ENCODE measurements at regions of chr1 and their contacts with region 1.

Region 1: GRCh38 chr1:173476664-173477285 is 360 bp upstream of the PRDX6 start:
- DNase-seq: peak; percentile 51 to 91 (median 73)
- ATAC-seq: peak; percentile 76
- H3K4me3 ChIP-seq: peak overlapping the region; percentile 71 to 83
- H3K4me3 Mint-ChIP-seq: peak overlapping the region; percentile 93
- H3K27ac ChIP-seq: peak overlapping the region; percentile 70 to 91
- H3K27ac Mint-ChIP-seq: peak overlapping the region; percentile 95
- H3K4me1 ChIP-seq: peaks cover 54% of the 10 kb centered on the region
- H3K4me1 Mint-ChIP-seq: peaks cover 75% of the 10 kb centered on the region
- H3K27me3 ChIP-seq: no peaks in the 10 kb centered on the region
- H3K27me3 Mint-ChIP-seq: no peaks in the 10 kb centered on the region
- CTCF ChIP-seq: no peak

Region 2: GRCh38 chr1:171741872-171742576 is 1734.8 kb before region 1 on chr1 and contains the start of gene VAMP4:
- CTCF ChIA-PET with region 1: no interaction called
- POLR2A ChIA-PET with region 1: no interaction called
- intact Hi-C with region 1: loop called in 1 of 2 experiments (anchors 10 kb)
- DNase-seq: peak; percentile 72 to 93 (median 85)
- ATAC-seq: peak; percentile 87
- H3K4me3 ChIP-seq: peak within 1 kb of the TSS; percentile 94 to 99
- H3K4me3 Mint-ChIP-seq: peak within 1 kb of the TSS; percentile 100
- H3K27ac ChIP-seq: peak within 1 kb of the TSS; percentile 96 to 99
- H3K27ac Mint-ChIP-seq: peak within 1 kb of the TSS; percentile 100
- H3K4me1 ChIP-seq: peaks cover 39% of the 10 kb centered on the region
- H3K4me1 Mint-ChIP-seq: peaks cover 51% of the 10 kb centered on the region
- H3K27me3 ChIP-seq: no peaks in the 10 kb centered on the region
- H3K27me3 Mint-ChIP-seq: no peaks in the 10 kb centered on the region
- CTCF ChIP-seq: no peak
- total RNA-seq, gene VAMP4: 8.4 to 8.6 TPM

Region 3: DNA sequence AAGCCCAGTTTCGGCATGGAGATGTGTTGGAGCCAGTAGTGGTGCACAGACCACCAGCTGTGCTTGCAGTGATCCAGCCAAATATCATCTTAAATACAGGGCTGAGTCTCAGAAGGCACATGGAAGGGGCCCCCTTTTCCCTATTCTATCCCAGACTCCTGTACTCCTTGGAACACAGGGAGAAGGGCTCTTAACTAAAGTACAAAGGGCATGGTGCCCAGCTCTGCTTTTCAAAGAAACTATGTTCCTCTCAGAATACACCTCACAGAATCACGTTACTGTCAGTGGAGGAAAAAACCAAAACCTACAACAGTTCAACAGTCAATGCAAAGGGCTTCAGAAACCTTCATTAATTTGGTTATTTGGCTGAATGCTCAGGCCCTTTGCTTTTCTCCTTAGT is 1236.9 kb before region 1 on chr1:
- CTCF ChIA-PET with region 1: no interaction called
- POLR2A ChIA-PET with region 1: no interaction called
- intact Hi-C with region 1: no loop called
- DNase-seq: no peak
- ATAC-seq: no peak
- H3K4me3 ChIP-seq: no peak overlapping the region
- H3K4me3 Mint-ChIP-seq: no peak overlapping the region
- H3K27ac ChIP-seq: no peak overlapping the region
- H3K27ac Mint-ChIP-seq: no peak overlapping the region
- H3K4me1 ChIP-seq: no peaks in the 10 kb centered on the region
- H3K4me1 Mint-ChIP-seq: no peaks in the 10 kb centered on the region
- H3K27me3 ChIP-seq: no peaks in the 10 kb centered on the region
- H3K27me3 Mint-ChIP-seq: no peaks in the 10 kb centered on the region
- CTCF ChIP-seq: no peak

Region 4: DNA sequence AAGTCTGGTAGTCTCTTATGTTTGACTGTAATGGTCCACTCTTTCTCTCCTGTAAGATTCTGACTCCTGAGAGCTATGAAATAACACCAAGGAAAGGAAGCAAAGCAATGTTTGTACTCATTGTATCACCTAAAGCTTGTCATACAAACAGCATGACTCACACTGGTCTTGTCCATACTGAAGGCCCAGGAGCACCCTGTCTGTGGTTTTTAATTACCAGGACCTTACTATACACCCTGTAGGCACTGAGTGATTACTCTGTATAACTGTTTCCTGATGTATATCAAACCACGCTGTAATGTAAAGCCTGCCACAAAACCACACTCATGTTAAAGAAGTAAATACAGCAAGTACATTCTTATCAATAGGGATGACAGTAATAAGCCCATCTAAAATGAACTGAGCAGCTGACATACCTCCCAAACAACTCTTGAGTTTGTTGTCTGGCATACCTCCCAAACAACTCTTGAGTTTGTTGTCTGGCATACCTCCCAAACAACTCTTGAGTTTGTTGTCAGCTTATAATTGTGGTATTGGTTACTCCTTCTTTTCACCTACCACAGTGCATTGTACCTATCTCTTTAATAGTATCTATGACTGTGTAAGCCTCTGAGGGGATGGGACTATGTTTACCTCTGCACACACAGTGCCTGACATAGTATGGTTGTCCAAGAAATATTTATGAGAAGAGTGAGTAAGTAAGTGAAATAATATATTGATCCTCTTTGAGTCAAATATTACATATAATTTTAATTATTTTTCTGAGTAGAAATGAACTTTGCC is 414.4 kb before region 1 on chr1:
- CTCF ChIA-PET with region 1: no interaction called
- POLR2A ChIA-PET with region 1: no interaction called
- intact Hi-C with region 1: no loop called
- DNase-seq: no peak
- ATAC-seq: no peak
- H3K4me3 ChIP-seq: no peak overlapping the region
- H3K4me3 Mint-ChIP-seq: no peak overlapping the region
- H3K27ac ChIP-seq: no peak overlapping the region
- H3K27ac Mint-ChIP-seq: no peak overlapping the region
- H3K4me1 ChIP-seq: no peaks in the 10 kb centered on the region
- H3K4me1 Mint-ChIP-seq: no peaks in the 10 kb centered on the region
- H3K27me3 ChIP-seq: no peaks in the 10 kb centered on the region
- H3K27me3 Mint-ChIP-seq: no peaks in the 10 kb centered on the region
- CTCF ChIP-seq: no peak

Region 5: GRCh38 chr1:173603056-173603620 is 126.4 kb after region 1 on chr1 and contains the start of gene SLC9C2:
- CTCF ChIA-PET with region 1: no interaction called
- POLR2A ChIA-PET with region 1: no interaction called
- intact Hi-C with region 1: no loop called
- DNase-seq: no peak
- ATAC-seq: no peak
- H3K4me3 ChIP-seq: no peak within 1 kb of the TSS
- H3K4me3 Mint-ChIP-seq: no peak within 1 kb of the TSS
- H3K27ac ChIP-seq: no peak within 1 kb of the TSS
- H3K27ac Mint-ChIP-seq: no peak within 1 kb of the TSS
- H3K4me1 ChIP-seq: no peaks in the 10 kb centered on the region
- H3K4me1 Mint-ChIP-seq: peaks cover 7% of the 10 kb centered on the region
- H3K27me3 ChIP-seq: no peaks in the 10 kb centered on the region
- H3K27me3 Mint-ChIP-seq: no peaks in the 10 kb centered on the region
- CTCF ChIP-seq: no peak
- total RNA-seq, gene SLC9C2: not detected

Region 6: DNA sequence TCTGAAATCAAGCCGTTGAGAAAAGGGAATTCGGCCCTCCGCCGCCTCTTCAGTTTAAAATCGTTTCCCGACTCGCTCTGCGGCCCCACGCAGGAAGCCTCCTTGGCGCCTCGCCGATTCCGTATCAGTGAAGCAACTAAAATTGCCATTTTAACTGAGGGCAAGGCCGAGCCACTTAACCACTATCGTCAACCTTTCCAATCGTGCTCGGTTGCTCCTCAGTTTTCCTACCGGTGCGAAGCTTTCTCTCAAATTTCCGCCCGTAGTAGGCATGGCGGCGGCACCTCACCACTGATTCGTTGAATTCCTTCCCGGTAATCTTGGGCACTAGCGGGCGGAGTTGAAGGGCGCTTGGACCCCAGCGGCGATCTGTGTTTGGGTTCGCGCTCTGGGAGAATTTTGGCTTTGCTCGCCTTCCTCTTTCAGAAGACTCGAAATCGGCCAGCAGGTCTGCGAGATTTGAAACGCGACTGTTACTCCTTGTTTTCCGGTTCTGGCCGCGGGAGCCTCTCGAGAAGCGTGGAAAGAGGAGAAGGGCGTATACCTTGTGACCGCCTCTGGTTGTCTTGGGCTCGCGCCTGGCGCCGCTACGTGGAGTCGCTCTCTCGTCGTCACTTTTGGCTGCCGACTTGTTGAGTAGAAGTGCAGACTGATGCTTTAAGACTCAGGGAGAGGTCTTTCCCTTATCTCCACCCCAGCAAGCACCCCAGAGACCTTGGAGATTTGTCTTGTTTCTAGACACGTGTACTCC is 347.7 kb after region 1 on chr1 and contains the starts of genes CENPL and DARS2:
- CTCF ChIA-PET with region 1: interaction called, 8 read pairs
- POLR2A ChIA-PET with region 1: interaction called, 3 read pairs
- intact Hi-C with region 1: loop called (anchors 1 kb)
- DNase-seq: peak; percentile 79 to 97 (median 90)
- ATAC-seq: peak; percentile 86
- H3K4me3 ChIP-seq: peak within 1 kb of the TSS; percentile 92 to 97
- H3K4me3 Mint-ChIP-seq: peak within 1 kb of the TSS; percentile 93
- H3K27ac ChIP-seq: peak within 1 kb of the TSS; percentile 78 to 87
- H3K27ac Mint-ChIP-seq: peak within 1 kb of the TSS; percentile 90
- H3K4me1 ChIP-seq: peaks cover 11% of the 10 kb centered on the region
- H3K4me1 Mint-ChIP-seq: peaks cover 54% of the 10 kb centered on the region
- H3K27me3 ChIP-seq: no peaks in the 10 kb centered on the region
- H3K27me3 Mint-ChIP-seq: no peaks in the 10 kb centered on the region
- CTCF ChIP-seq: no peak
- total RNA-seq, gene CENPL: 4.0 to 5.7 TPM
- total RNA-seq, gene DARS2: 1.5 to 1.6 TPM

Region 7: GRCh38 chr1:174022080-174022975 is 545.6 kb after region 1 on chr1 and contains the start of gene RC3H1:
- CTCF ChIA-PET with region 1: no interaction called
- POLR2A ChIA-PET with region 1: interaction called, 3 read pairs
- intact Hi-C with region 1: loop called (anchors 1 to 2 kb)
- DNase-seq: peak; percentile 79 to 93 (median 89)
- ATAC-seq: peak; percentile 95
- H3K4me3 ChIP-seq: peak within 1 kb of the TSS; percentile 83 to 94
- H3K4me3 Mint-ChIP-seq: peak within 1 kb of the TSS; percentile 95
- H3K27ac ChIP-seq: peak within 1 kb of the TSS; percentile 84 to 93
- H3K27ac Mint-ChIP-seq: peak within 1 kb of the TSS; percentile 98
- H3K4me1 ChIP-seq: peaks cover 30% of the 10 kb centered on the region
- H3K4me1 Mint-ChIP-seq: peaks cover 45% of the 10 kb centered on the region
- H3K27me3 ChIP-seq: no peaks in the 10 kb centered on the region
- H3K27me3 Mint-ChIP-seq: no peaks in the 10 kb centered on the region
- CTCF ChIP-seq: no peak
- total RNA-seq, gene RC3H1: 40.2 to 41.4 TPM

Region 8: DNA sequence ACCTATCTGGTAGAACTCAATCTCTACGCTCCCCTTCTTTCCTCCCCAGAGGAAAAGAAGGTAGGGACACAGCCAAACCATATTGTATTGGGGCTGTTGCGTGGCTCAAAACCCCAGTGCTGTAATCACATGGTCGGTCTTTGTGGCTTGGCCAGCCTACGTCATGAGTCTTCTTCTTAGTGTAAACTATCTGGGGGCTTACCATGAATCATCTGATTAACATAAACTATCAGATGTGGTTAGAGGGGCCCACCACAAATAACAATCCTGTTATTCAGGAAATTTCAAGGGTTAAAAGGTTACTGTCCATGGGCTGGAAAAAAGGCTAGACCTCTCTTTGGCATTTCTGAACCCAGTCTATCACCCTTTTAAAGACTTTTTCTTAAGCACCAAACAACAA is 921.5 kb after region 1 on chr1:
- CTCF ChIA-PET with region 1: no interaction called
- POLR2A ChIA-PET with region 1: no interaction called
- intact Hi-C with region 1: no loop called
- DNase-seq: peak in 1 of 9 experiments; percentile 2
- ATAC-seq: no peak
- H3K4me3 ChIP-seq: no peak overlapping the region
- H3K4me3 Mint-ChIP-seq: no peak overlapping the region
- H3K27ac ChIP-seq: no peak overlapping the region
- H3K27ac Mint-ChIP-seq: no peak overlapping the region
- H3K4me1 ChIP-seq: no peaks in the 10 kb centered on the region
- H3K4me1 Mint-ChIP-seq: peaks cover 2% of the 10 kb centered on the region
- H3K27me3 ChIP-seq: no peaks in the 10 kb centered on the region
- H3K27me3 Mint-ChIP-seq: no peaks in the 10 kb centered on the region
- CTCF ChIP-seq: no peak

Region 9: GRCh38 chr1:175221666-175222175 is 1744.9 kb after region 1 on chr1:
- CTCF ChIA-PET with region 1: no interaction called
- POLR2A ChIA-PET with region 1: no interaction called
- intact Hi-C with region 1: loop called in 1 of 2 experiments (anchors 10 kb)
- DNase-seq: no peak
- ATAC-seq: no peak
- H3K4me3 ChIP-seq: no peak overlapping the region
- H3K4me3 Mint-ChIP-seq: no peak overlapping the region
- H3K27ac ChIP-seq: no peak overlapping the region
- H3K27ac Mint-ChIP-seq: no peak overlapping the region
- H3K4me1 ChIP-seq: no peaks in the 10 kb centered on the region
- H3K4me1 Mint-ChIP-seq: peaks cover 11% of the 10 kb centered on the region
- H3K27me3 ChIP-seq: no peaks in the 10 kb centered on the region
- H3K27me3 Mint-ChIP-seq: no peaks in the 10 kb centered on the region
- CTCF ChIP-seq: no peak